Dorsolateral prefrontal cortex (tissue), 120 donors: ENCODE measurements at regions of chr2 and their contacts with region 1.

Region 1: GRCh38 chr2:174341286-174341994 is 6.7 kb downstream of the SP9 start:
- DNase-seq: peak; percentile 79 to 93 (median 86)
- H3K4me3 ChIP-seq: peak overlapping the region in 28 of 59 donors; percentile 2 to 54 (median 22)
- H3K27ac ChIP-seq: peak overlapping the region in 5 of 59 donors; percentile 7 to 55 (median 20)
- H3K27me3 ChIP-seq: peaks cover 32 to 86% (median 80%) of the 10 kb centered on the region in 45 donors
- CTCF ChIP-seq: peak; percentile 63 to 98 (median 95)

Region 2: GRCh38 chr2:173402405-173402974 is 939.0 kb before region 1 on chr2:
- intact Hi-C with region 1: loop called (anchors 2 kb)
- DNase-seq: peak; percentile 53 to 79 (median 70)
- H3K4me3 ChIP-seq: peak overlapping the region in 22 of 59 donors; percentile 2 to 42 (median 19)
- H3K27ac ChIP-seq: no peak overlapping the region
- H3K27me3 ChIP-seq: peaks cover 0 to 93% (median 59%) of the 10 kb centered on the region in 45 donors
- CTCF ChIP-seq: peak; percentile 71 to 92 (median 82)

Region 3: GRCh38 chr2:173965329-173966025 is 376.0 kb before region 1 on chr2 and contains the start of gene SP3:
- intact Hi-C with region 1: loop called in 1 of 2 experiments (anchors 10 kb)
- DNase-seq: peak; percentile 92 to 97 (median 96)
- H3K4me3 ChIP-seq: peak within 1 kb of the TSS; percentile 65 to 100 (median 94)
- H3K27ac ChIP-seq: peak within 1 kb of the TSS; percentile 98 to 100 (median 100)
- H3K27me3 ChIP-seq: no peaks in the 10 kb centered on the region
- CTCF ChIP-seq: peak in 14 of 56 donors; percentile 5 to 32 (median 16)
- total RNA-seq, gene SP3: 41.4 to 79.2 (median 59.4) TPM

Region 4: GRCh38 chr2:174158003-174158402 is 183.4 kb before region 1 on chr2:
- intact Hi-C with region 1: loop called (anchors 2 to 10 kb)
- DNase-seq: peak in 1 of 10 donors; percentile 22
- H3K4me3 ChIP-seq: no peak overlapping the region
- H3K27ac ChIP-seq: no peak overlapping the region
- H3K27me3 ChIP-seq: no peaks in the 10 kb centered on the region
- CTCF ChIP-seq: peak in 53 of 56 donors; percentile 21 to 69 (median 50)

Region 5: DNA sequence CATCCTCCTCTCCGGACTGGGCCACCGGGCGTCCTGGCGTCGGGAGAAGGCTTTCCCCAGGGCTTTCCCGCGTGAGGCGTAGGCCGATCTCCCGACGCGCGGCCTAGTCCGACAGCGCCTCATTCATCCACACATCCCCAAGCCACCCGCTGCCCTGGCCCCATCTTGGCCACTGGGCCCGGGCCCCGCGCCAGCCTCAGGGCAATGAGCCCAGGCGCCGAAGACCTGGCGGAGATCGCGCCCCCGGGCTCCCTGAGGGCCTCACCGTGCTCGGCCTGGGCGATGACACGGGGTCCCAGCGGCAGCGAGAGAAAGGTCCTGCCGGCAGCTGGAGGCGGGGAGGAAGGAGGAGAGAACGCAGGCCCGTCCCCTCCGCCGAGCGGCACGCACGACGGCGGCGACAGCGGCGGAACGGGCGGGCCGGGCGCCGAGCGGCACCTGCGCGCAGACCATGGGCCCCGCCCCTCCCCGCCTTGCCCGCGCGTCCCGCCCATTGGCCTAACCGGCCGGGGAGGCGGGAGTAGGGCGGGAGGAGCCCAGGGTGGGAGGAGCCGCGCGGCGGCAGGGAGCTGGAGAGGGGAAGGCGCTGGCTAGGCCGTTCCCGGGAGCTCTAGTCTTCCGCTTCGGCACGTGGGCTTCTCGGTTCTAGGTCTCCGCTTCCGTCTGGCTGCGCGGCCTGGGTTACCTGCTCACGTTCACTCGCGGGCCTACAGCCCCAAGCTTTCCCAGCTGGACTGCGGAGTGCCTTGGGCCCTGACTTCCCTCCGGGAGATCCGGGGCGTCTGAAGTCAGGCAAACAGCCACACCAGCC is 93.0 kb before region 1 on chr2 and contains the start of gene OLA1:
- intact Hi-C with region 1: loop called in 1 of 2 experiments (anchors 5 kb)
- DNase-seq: peak; percentile 82 to 97 (median 92)
- H3K4me3 ChIP-seq: peak within 1 kb of the TSS; percentile 60 to 97 (median 88)
- H3K27ac ChIP-seq: peak within 1 kb of the TSS in 56 of 59 donors; percentile 17 to 93 (median 79)
- H3K27me3 ChIP-seq: no peaks in the 10 kb centered on the region
- CTCF ChIP-seq: peak in 26 of 56 donors; percentile 3 to 53 (median 24)
- total RNA-seq, gene OLA1: 32.9 to 139 (median 93.6) TPM

Region 6: DNA sequence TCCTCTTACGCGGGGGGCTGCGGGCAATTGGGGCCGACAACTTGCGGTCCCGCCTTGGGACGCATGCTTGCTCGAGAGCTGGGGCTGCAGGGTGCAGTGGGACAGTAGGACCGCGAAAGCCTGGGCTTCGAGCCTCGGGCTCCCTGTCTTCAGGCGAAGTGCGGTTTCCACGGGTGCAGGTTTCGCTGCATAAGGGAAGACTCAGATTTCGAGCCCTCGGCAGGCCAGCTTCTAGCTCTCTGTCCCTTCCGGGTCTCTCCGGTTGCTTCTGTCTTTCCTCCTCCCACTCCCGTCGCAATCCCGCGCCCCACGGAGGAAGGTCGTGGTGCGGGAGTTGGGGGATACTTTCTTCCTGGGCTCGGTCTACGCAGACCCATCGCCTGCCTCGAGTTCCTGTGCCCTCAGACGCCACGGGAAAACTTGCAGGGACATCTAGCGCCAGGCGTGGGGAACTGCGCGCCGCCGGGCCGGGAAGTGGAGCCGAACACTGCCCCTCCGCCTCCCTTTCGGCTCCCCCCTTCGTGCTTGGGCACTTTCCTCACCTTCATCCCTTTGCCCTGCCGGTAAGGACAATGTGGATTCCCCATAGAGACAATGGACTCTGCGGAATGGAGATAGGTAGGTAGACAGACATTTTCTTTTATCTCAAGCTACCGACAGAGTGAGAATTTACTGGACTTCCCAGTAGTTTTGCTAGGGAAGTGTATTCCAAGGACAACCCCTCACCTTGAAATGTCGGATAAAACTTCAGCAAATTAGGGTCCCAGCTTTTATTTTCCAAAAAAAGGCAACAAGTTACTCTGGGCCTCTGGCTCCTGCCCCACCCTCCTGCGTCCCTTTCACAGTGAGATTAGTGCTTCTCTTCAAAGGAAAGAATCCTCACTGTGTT is 1746.9 kb after region 1 on chr2:
- intact Hi-C with region 1: loop called in 1 of 2 experiments (anchors 10 kb)
- DNase-seq: peak in 4 of 10 donors; percentile 11 to 63 (median 26)
- H3K4me3 ChIP-seq: peak overlapping the region in 20 of 59 donors; percentile 11 to 56 (median 30)
- H3K27ac ChIP-seq: no peak overlapping the region
- H3K27me3 ChIP-seq: peaks cover 51 to 100% (median 100%) of the 10 kb centered on the region in 45 donors
- CTCF ChIP-seq: peak; percentile 19 to 79 (median 66)

Region 7: GRCh38 chr2:176126929-176127773 is 1785.7 kb after region 1 on chr2:
- intact Hi-C with region 1: loop called in 1 of 2 experiments (anchors 5 kb)
- DNase-seq: peak in 9 of 10 donors; percentile 47 to 74 (median 63)
- H3K4me3 ChIP-seq: no peak overlapping the region
- H3K27ac ChIP-seq: no peak overlapping the region
- H3K27me3 ChIP-seq: peaks cover 22 to 100% (median 95%) of the 10 kb centered on the region in 45 donors
- CTCF ChIP-seq: peak; percentile 73 to 98 (median 90)